ENCODE measurements at regions of chr5 and their contacts with region 1.

Region 1: GRCh38 chr5:40623480-40624420 is 56.0 kb upstream of the PTGER4 start:
- DNase-seq: peak in 7 of 9 donors; percentile 49 to 78 (median 68)
- ATAC-seq: peak; percentile 90
- H3K4me3 ChIP-seq: no peak overlapping the region
- H3K4me3 Mint-ChIP-seq: peak overlapping the region; percentile 13 to 73 (median 46)
- H3K27ac ChIP-seq: peak overlapping the region; percentile 50
- H3K27ac Mint-ChIP-seq: peak overlapping the region; percentile 60 to 94 (median 83)
- H3K4me1 ChIP-seq: peaks cover 23 to 25% of the 10 kb centered on the region in 2 donors
- H3K4me1 Mint-ChIP-seq: peaks cover 23 to 68% (median 55%) of the 10 kb centered on the region in 7 donors
- H3K27me3 ChIP-seq: no peaks in the 10 kb centered on the region
- H3K27me3 Mint-ChIP-seq: no peaks in the 10 kb centered on the region

Region 2: DNA sequence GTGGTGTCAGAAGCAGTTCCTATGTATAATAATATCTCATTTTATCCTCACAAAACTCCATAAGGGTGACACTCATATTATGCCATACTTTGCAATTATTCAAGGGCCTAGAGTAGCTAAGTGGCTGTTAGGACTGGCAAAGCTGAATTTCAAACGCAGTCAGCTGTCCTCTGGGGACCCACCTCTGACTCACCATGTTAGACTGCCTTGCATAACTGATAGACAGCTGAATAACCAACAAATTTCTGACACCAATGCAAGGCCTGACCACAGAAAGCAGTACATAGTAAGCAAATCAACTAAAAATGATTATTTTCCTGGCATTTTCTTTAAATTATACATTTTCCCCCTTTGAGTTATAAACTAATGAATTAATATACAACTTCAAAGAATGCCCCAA is 195.6 kb before region 1 on chr5:
- CTCF ChIA-PET with region 1: no interaction called
- POLR2A ChIA-PET with region 1: no interaction called
- intact Hi-C with region 1: no loop called
- DNase-seq: no peak
- ATAC-seq: peak; percentile 71
- H3K4me3 ChIP-seq: no peak overlapping the region
- H3K4me3 Mint-ChIP-seq: no peak overlapping the region
- H3K27ac ChIP-seq: no peak overlapping the region
- H3K27ac Mint-ChIP-seq: peak overlapping the region in 2 of 9 donors; percentile 1 to 91
- H3K4me1 ChIP-seq: peaks cover 0 to 15% of the 10 kb centered on the region in 2 donors
- H3K4me1 Mint-ChIP-seq: peaks cover 0 to 40% (median 14%) of the 10 kb centered on the region in 7 donors
- H3K27me3 ChIP-seq: no peaks in the 10 kb centered on the region
- H3K27me3 Mint-ChIP-seq: no peaks in the 10 kb centered on the region

Region 3: GRCh38 chr5:40578501-40579451 is 45.0 kb before region 1 on chr5:
- CTCF ChIA-PET with region 1: no interaction called
- POLR2A ChIA-PET with region 1: no interaction called
- intact Hi-C with region 1: loop called in 1 of 2 experiments (anchors 2 kb)
- DNase-seq: peak in 4 of 9 donors; percentile 7 to 45 (median 8)
- ATAC-seq: peak; percentile 45
- H3K4me3 ChIP-seq: no peak overlapping the region
- H3K4me3 Mint-ChIP-seq: peak overlapping the region in 9 of 10 donors; percentile 61 to 83 (median 79)
- H3K27ac ChIP-seq: peak overlapping the region; percentile 11
- H3K27ac Mint-ChIP-seq: peak overlapping the region; percentile 6 to 85 (median 73)
- H3K4me1 ChIP-seq: no peaks in the 10 kb centered on the region
- H3K4me1 Mint-ChIP-seq: peaks cover 14 to 35% (median 24%) of the 10 kb centered on the region in 7 donors
- H3K27me3 ChIP-seq: no peaks in the 10 kb centered on the region
- H3K27me3 Mint-ChIP-seq: no peaks in the 10 kb centered on the region

Region 4: GRCh38 chr5:40605295-40605958 is 18.3 kb before region 1 on chr5:
- CTCF ChIA-PET with region 1: interaction called, 3 read pairs
- POLR2A ChIA-PET with region 1: interaction called, 4 read pairs
- intact Hi-C with region 1: loop called in 1 of 2 experiments (anchors 2 kb)
- DNase-seq: peak in 5 of 9 donors; percentile 15 to 46 (median 33)
- ATAC-seq: peak; percentile 63
- H3K4me3 ChIP-seq: no peak overlapping the region
- H3K4me3 Mint-ChIP-seq: peak overlapping the region in 6 of 10 donors; percentile 47 to 80 (median 68)
- H3K27ac ChIP-seq: no peak overlapping the region
- H3K27ac Mint-ChIP-seq: peak overlapping the region in 5 of 9 donors; percentile 11 to 57 (median 32)
- H3K4me1 ChIP-seq: peaks cover 15 to 17% of the 10 kb centered on the region in 2 donors
- H3K4me1 Mint-ChIP-seq: peaks cover 23 to 39% (median 32%) of the 10 kb centered on the region in 7 donors
- H3K27me3 ChIP-seq: no peaks in the 10 kb centered on the region
- H3K27me3 Mint-ChIP-seq: no peaks in the 10 kb centered on the region